Activated CD4-positive, alpha-beta T cell treated with anti-CD3 and anti-CD28 coated beads for 36 hours (primary cell): ENCODE measurements at regions of chr17 and their contacts with region 1.

Region 1: GRCh38 chr17:68035523-68036303 is at the start of gene KPNA2:
- DNase-seq: peak; percentile 93
- ATAC-seq: peak; percentile 91
- H3K4me3 Mint-ChIP-seq: peak within 1 kb of the TSS; percentile 96
- H3K27ac Mint-ChIP-seq: peak within 1 kb of the TSS; percentile 97
- H3K4me1 Mint-ChIP-seq: peaks cover 18% of the 10 kb centered on the region
- H3K27me3 Mint-ChIP-seq: no peaks in the 10 kb centered on the region
- total RNA-seq, gene KPNA2: 186 to 190 TPM

Region 2: GRCh38 chr17:67824735-67825626 is 210.7 kb before region 1 on chr17 and contains the start of gene BPTF:
- CTCF ChIA-PET with region 1: no interaction called
- POLR2A ChIA-PET with region 1: no interaction called
- intact Hi-C with region 1: loop called (anchors 1 to 5 kb)
- DNase-seq: peak; percentile 95
- ATAC-seq: peak; percentile 88
- H3K4me3 Mint-ChIP-seq: peak within 1 kb of the TSS; percentile 99
- H3K27ac Mint-ChIP-seq: peak within 1 kb of the TSS; percentile 98
- H3K4me1 Mint-ChIP-seq: peaks cover 26% of the 10 kb centered on the region
- H3K27me3 Mint-ChIP-seq: peaks cover 5% of the 10 kb centered on the region
- total RNA-seq, gene BPTF: 77.6 to 109 TPM

Region 3: GRCh38 chr17:67902511-67903231 is 133.0 kb before region 1 on chr17:
- CTCF ChIA-PET with region 1: no interaction called
- POLR2A ChIA-PET with region 1: no interaction called
- intact Hi-C with region 1: no loop called
- DNase-seq: no peak
- ATAC-seq: no peak
- H3K4me3 Mint-ChIP-seq: no peak overlapping the region
- H3K27ac Mint-ChIP-seq: no peak overlapping the region
- H3K4me1 Mint-ChIP-seq: no peaks in the 10 kb centered on the region
- H3K27me3 Mint-ChIP-seq: no peaks in the 10 kb centered on the region

Region 4: DNA sequence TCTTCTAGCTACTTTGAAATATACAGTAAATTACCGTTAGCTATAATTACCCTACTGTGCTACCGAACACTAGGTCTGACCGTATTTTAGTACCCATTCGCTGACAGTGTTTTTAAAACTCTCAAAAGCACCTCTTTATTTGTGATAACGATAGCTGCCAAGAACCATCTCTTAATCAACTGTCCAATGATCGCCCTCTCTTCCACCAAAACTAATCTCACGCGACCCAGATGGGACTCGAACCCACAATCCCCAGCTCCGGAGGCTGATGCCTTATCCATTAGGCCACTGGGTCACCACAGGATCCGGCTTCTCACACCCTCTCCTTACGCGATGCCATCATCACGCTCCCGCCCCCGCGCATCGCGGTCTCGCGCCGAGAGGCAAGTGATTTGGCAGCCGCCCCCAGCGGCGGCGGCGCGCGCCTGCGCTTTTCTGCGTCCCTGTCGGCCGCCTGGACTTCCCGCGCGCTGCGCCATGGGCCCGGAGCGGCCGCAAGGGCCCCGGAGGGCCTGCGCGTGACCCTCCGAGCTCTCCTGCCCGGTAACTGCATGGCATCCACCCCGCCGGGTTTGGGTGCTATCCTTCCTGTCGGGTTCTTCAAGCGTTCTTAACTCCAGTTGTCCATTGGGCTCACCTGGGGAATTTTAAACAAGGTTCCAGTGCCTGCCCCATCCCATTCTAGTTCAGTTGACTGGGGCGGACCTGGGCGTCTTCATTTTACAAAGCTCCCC is 15.9 kb before region 1 on chr17:
- CTCF ChIA-PET with region 1: interaction called, 9 read pairs
- POLR2A ChIA-PET with region 1: interaction called, 12 read pairs
- intact Hi-C with region 1: loop called (anchors 1 kb)
- DNase-seq: peak; percentile 98
- ATAC-seq: peak; percentile 93
- H3K4me3 Mint-ChIP-seq: peak overlapping the region; percentile 78
- H3K27ac Mint-ChIP-seq: peak overlapping the region; percentile 93
- H3K4me1 Mint-ChIP-seq: peaks cover 8% of the 10 kb centered on the region
- H3K27me3 Mint-ChIP-seq: no peaks in the 10 kb centered on the region

Region 5: DNA sequence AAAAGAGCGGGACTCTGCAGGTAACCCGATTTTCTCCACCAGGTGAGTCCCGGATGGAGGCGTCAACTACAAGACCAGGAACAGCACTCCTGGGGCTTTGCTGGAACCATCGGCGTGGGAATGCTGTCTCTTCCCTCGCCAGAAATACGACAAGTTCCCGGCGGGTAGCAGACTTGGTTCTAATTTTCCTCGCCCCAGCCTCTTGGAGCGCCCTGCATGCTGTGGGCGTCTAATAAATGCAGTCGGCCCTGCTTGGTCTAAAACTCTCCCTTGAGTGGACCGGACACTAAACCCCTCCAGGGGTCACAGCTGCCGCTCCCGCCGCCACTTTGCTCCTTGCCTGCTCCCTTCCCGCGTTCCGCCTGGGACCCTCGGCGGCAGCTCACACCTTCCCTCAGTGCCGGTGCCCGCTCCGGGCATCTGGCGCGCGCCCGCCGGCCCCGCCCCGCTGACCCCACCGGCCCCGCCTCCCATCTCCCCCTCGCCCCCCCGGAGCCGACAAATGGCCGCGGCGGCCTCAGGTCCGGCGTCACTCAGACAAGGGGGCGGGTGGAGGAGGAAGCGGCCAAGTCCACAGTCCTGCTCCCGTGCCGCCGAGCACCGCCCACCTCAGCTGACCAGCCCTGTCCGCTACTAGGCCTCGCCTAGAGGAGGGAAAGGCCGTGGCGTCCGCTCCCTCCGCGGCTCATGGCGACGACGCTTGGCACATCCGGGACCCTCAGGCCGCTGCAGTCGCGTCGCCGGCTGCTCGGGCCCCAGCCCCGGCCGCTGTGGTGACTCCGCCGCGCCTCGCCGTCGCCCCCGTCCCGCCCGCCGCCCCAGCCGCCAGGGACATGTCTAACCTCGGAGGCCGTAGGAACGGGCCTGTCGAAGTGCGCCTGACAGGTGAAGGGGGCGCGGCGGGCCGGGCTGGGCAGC is 65.6 kb after region 1 on chr17:
- CTCF ChIA-PET with region 1: no interaction called
- POLR2A ChIA-PET with region 1: no interaction called
- intact Hi-C with region 1: loop called in 1 of 2 experiments (anchors 1 kb)
- DNase-seq: peak; percentile 71
- ATAC-seq: peak; percentile 63
- H3K4me3 Mint-ChIP-seq: peak overlapping the region; percentile 87
- H3K27ac Mint-ChIP-seq: peak overlapping the region; percentile 91
- H3K4me1 Mint-ChIP-seq: peaks cover 31% of the 10 kb centered on the region
- H3K27me3 Mint-ChIP-seq: no peaks in the 10 kb centered on the region

Region 6: GRCh38 chr17:68205251-68205807 is 169.6 kb after region 1 on chr17:
- CTCF ChIA-PET with region 1: interaction called, 3 read pairs
- POLR2A ChIA-PET with region 1: no interaction called
- intact Hi-C with region 1: loop called in 1 of 2 experiments (anchors 5 kb)
- DNase-seq: peak; percentile 96
- ATAC-seq: peak; percentile 87
- H3K4me3 Mint-ChIP-seq: peak overlapping the region; percentile 93
- H3K27ac Mint-ChIP-seq: peak overlapping the region; percentile 78
- H3K4me1 Mint-ChIP-seq: peaks cover 27% of the 10 kb centered on the region
- H3K27me3 Mint-ChIP-seq: peaks cover 7% of the 10 kb centered on the region

Region 7: GRCh38 chr17:68512247-68512982 is 476.7 kb after region 1 on chr17 and contains the start of gene PRKAR1A:
- CTCF ChIA-PET with region 1: no interaction called
- POLR2A ChIA-PET with region 1: interaction called, 5 read pairs
- intact Hi-C with region 1: loop called in 1 of 2 experiments (anchors 2 kb)
- DNase-seq: peak; percentile 95
- ATAC-seq: peak; percentile 92
- H3K4me3 Mint-ChIP-seq: peak within 1 kb of the TSS; percentile 93
- H3K27ac Mint-ChIP-seq: peak within 1 kb of the TSS; percentile 97
- H3K4me1 Mint-ChIP-seq: peaks cover 42% of the 10 kb centered on the region
- H3K27me3 Mint-ChIP-seq: no peaks in the 10 kb centered on the region
- total RNA-seq, gene PRKAR1A: 165 to 167 TPM